Panc1 (cell line): ENCODE measurements at regions of chr3 and their contacts with region 1.

Region 1: GRCh38 chr3:53938645-53939044 is 47.0 kb upstream of the SELENOK start:
- DNase-seq: peak; percentile 35
- ATAC-seq: peak; percentile 82; the same call in 1 of the 2 replicates
- H3K4me3 ChIP-seq: no peak overlapping the region
- H3K27ac ChIP-seq: no peak overlapping the region
- H3K4me1 ChIP-seq: no peaks in the 10 kb centered on the region
- H3K27me3 ChIP-seq: peaks cover 2% of the 10 kb centered on the region; the same call in 1 of the 2 replicates
- CTCF ChIP-seq: peak; percentile 77

Region 2: GRCh38 chr3:54427941-54428871 is 489.6 kb after region 1 on chr3:
- CTCF ChIA-PET with region 1: no interaction called
- POLR2A ChIA-PET with region 1: no interaction called
- in situ Hi-C with region 1: no loop called
- intact Hi-C with region 1: loop called (anchors 5 kb)
- DNase-seq: peak; percentile 35
- ATAC-seq: no peak
- H3K4me3 ChIP-seq: no peak overlapping the region
- H3K27ac ChIP-seq: no peak overlapping the region
- H3K4me1 ChIP-seq: no peaks in the 10 kb centered on the region
- H3K27me3 ChIP-seq: no peaks in the 10 kb centered on the region
- CTCF ChIP-seq: peak; percentile 86